ENCODE measurements at regions of chr15 and their contacts with region 1.

Region 1: DNA sequence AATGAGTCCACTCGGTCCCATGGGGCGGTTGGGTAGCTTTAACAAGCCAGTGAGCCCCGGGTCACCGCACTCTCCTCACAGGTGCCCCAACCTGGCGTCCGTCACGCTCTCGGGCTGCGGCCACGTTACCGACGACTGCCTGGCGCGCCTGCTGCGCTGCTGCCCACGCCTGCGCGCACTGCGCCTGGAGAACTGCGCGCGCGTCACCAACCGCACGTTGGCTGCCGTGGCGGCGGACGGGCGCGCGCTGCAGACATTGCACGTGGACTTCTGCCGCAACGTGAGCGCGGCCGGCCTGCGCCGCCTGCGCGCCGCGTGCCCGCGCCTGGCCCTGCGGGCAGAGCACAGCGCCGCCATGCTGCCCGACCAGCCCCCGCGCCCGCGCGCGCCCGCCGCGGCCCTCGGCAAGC is 3.4 kb downstream of the FBXL22 start:
- DNase-seq: peak; percentile 86
- H3K4me3 Mint-ChIP-seq: peak overlapping the region; percentile 92
- H3K27ac Mint-ChIP-seq: peak overlapping the region; percentile 93
- H3K4me1 Mint-ChIP-seq: peaks cover 42% of the 10 kb centered on the region
- H3K27me3 Mint-ChIP-seq: no peaks in the 10 kb centered on the region

Region 2: GRCh38 chr15:63374686-63375520 is 225.7 kb before region 1 on chr15:
- intact Hi-C with region 1: loop called (anchors 10 kb)
- DNase-seq: peak; percentile 27
- H3K4me3 Mint-ChIP-seq: peak overlapping the region; percentile 9
- H3K27ac Mint-ChIP-seq: peak overlapping the region; percentile 89
- H3K4me1 Mint-ChIP-seq: peaks cover 51% of the 10 kb centered on the region
- H3K27me3 Mint-ChIP-seq: peaks cover 9% of the 10 kb centered on the region

Region 3: GRCh38 chr15:63466378-63467192 is 134.0 kb before region 1 on chr15:
- intact Hi-C with region 1: loop called (anchors 2 kb)
- DNase-seq: peak; percentile 41
- H3K4me3 Mint-ChIP-seq: no peak overlapping the region
- H3K27ac Mint-ChIP-seq: no peak overlapping the region
- H3K4me1 Mint-ChIP-seq: peaks cover 26% of the 10 kb centered on the region
- H3K27me3 Mint-ChIP-seq: peaks cover 19% of the 10 kb centered on the region

Region 4: DNA sequence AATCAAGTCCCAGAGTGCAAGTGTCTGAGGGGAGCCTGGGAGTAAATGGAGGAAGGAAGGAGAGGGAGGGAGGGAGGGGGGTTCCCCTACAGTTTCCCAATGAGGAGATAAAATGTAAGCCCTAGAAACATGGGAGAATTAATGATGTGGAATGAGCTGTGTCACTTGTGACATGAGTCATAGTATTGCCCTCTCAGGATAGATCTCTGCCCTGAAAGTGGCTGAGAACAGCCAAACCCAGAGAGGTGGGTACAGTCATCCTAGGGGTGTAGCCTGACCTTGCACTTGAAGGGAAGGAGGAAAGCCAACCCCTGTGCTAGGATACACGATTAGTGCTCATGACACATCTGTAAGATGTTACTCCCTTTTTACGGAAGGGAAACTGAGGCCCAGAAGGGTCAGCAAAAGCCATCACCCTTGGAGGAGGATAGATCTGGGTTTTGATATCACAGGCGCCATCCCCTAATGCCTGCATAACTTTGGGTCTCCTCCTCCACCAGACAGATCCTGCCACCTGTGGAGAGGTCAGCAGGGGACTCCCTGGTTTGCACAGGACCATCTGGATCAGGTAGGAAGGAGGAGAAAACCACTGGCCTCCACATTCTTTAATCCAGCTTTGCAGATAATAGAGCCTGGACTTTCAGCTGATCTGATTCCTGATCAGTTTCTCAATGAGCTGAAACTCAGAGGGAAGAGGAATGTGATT is 119.4 kb before region 1 on chr15:
- intact Hi-C with region 1: loop called (anchors 5 kb)
- DNase-seq: no peak
- H3K4me3 Mint-ChIP-seq: no peak overlapping the region
- H3K27ac Mint-ChIP-seq: peak overlapping the region; percentile 42
- H3K4me1 Mint-ChIP-seq: peaks cover 53% of the 10 kb centered on the region
- H3K27me3 Mint-ChIP-seq: no peaks in the 10 kb centered on the region